HEK293 (cell line): ENCODE measurements at regions of chr19 and their contacts with region 1.

Region 1: DNA sequence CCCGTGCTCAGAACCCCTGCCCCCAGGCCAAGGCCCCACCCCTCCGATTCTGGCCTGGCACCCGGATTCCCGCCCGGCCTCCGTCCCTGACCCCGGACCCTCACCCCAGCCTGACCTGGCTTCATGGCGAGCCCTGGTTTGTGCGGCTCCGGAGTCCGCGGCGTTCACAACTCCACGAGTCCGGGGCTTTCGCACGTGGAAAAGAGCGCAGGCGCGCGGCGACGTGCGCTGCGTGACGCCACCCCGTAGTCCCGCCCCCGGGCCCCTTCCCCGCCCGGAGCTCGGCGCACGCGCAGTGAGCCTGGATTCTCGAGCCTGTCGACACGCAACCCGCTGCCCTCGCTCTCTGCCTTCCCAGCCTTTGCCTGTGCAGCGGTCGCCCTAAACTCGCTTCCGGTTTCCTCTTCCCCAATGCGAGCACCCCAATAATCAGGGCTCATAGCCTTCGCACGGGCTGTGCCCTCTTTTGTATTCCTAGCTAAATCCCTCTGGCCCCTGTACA is at the start of gene FBL:
- H3K4me3 ChIP-seq: peak within 1 kb of the TSS; percentile 62
- H3K27ac ChIP-seq: peak within 1 kb of the TSS; percentile 79
- H3K4me1 ChIP-seq: peaks cover 49% of the 10 kb centered on the region
- CTCF ChIP-seq: no peak

Region 2: GRCh38 chr19:39470724-39471339 is 375.4 kb before region 1 on chr19:
- CTCF ChIA-PET with region 1: no interaction called
- POLR2A ChIA-PET with region 1: no interaction called
- H3K4me3 ChIP-seq: no peak overlapping the region
- H3K27ac ChIP-seq: peak overlapping the region; percentile 19; the same call in 1 of the 2 replicates
- H3K4me1 ChIP-seq: no peaks in the 10 kb centered on the region
- CTCF ChIP-seq: no peak

Region 3: GRCh38 chr19:39671738-39672363 is 174.4 kb before region 1 on chr19:
- CTCF ChIA-PET with region 1: interaction called, 34 read pairs
- POLR2A ChIA-PET with region 1: no interaction called
- H3K4me3 ChIP-seq: no peak overlapping the region
- H3K27ac ChIP-seq: no peak overlapping the region
- H3K4me1 ChIP-seq: no peaks in the 10 kb centered on the region
- CTCF ChIP-seq: peak; percentile 94

Region 4: GRCh38 chr19:39778763-39779162 is 67.5 kb before region 1 on chr19 and contains the start of gene LEUTX:
- CTCF ChIA-PET with region 1: interaction called, 12 read pairs
- POLR2A ChIA-PET with region 1: interaction called, 4 read pairs
- H3K4me3 ChIP-seq: no peak within 1 kb of the TSS
- H3K27ac ChIP-seq: no peak within 1 kb of the TSS
- H3K4me1 ChIP-seq: no peaks in the 10 kb centered on the region
- CTCF ChIP-seq: no peak

Region 5: GRCh38 chr19:39813264-39813993 is 32.8 kb before region 1 on chr19:
- CTCF ChIA-PET with region 1: interaction called, 102 read pairs
- POLR2A ChIA-PET with region 1: interaction called, 3 read pairs
- H3K4me3 ChIP-seq: no peak overlapping the region
- H3K27ac ChIP-seq: 0 out of 2 replicates have a peak overlapping the region, but pooled peaks have one; percentile 53
- H3K4me1 ChIP-seq: peaks cover 11% of the 10 kb centered on the region
- CTCF ChIP-seq: no peak

Region 6: GRCh38 chr19:39858541-39858940 is 12.3 kb after region 1 on chr19:
- CTCF ChIA-PET with region 1: interaction called, 14 read pairs
- POLR2A ChIA-PET with region 1: interaction called, 9 read pairs
- H3K4me3 ChIP-seq: no peak overlapping the region
- H3K27ac ChIP-seq: no peak overlapping the region
- H3K4me1 ChIP-seq: no peaks in the 10 kb centered on the region
- CTCF ChIP-seq: no peak

Region 7: GRCh38 chr19:40090241-40091204 is 244.3 kb after region 1 on chr19 and contains the start of gene ZNF780A:
- CTCF ChIA-PET with region 1: no interaction called
- POLR2A ChIA-PET with region 1: interaction called, 12 read pairs
- H3K4me3 ChIP-seq: peak within 1 kb of the TSS; percentile 51
- H3K27ac ChIP-seq: peak within 1 kb of the TSS; percentile 87
- H3K4me1 ChIP-seq: peaks cover 16% of the 10 kb centered on the region
- CTCF ChIP-seq: peak; percentile 38; the same call in 1 of the 2 replicates

Region 8: DNA sequence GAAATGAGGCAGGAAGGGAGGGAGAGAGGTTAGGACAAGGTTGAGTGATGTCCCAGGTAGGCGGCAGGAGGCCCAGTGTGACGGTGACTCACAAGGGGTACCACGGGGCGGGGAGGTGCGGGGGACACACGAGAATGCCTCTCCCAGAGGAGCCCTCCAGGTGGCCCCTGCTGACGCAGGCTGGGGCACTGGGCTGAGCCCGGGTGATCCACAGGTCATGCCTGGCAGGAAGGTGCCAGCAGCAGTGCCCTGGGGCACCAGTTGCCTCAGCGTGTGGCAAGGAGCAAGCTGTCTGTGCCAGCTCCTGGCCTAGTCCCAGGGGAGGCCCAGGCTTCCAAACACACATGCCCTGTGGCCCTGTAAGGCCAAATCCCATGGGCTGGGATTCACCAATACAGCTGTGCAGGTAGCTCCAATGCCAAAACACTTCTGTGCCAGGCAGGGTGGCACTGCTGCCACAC is 410.9 kb after region 1 on chr19:
- CTCF ChIA-PET with region 1: no interaction called
- POLR2A ChIA-PET with region 1: no interaction called
- H3K4me3 ChIP-seq: no peak overlapping the region
- H3K27ac ChIP-seq: 0 out of 2 replicates have a peak overlapping the region, but pooled peaks have one; percentile 31
- H3K4me1 ChIP-seq: peaks cover 6% of the 10 kb centered on the region; the same call in 1 of the 2 replicates
- CTCF ChIP-seq: no peak

Region 9: DNA sequence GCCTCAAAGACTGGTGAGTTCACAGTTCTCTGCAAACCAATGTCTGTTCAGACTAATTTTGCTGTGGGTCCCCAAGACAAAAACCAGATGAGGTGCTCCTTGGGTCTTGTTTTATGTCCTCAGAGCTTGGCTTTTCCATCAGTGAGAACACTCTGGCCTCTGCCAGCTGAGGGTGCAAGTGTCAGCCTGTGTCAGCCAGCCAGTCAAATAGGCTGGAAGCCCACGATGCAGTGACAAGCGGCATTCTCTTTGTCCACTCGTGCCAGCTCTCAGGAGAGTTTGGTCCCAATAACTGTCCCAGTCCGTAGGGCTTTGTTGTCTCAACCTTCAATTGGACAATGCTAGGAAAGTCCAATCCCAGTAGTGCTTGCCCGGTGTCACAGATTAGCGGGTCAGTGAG is 448.3 kb after region 1 on chr19:
- CTCF ChIA-PET with region 1: no interaction called
- POLR2A ChIA-PET with region 1: no interaction called
- H3K4me3 ChIP-seq: no peak overlapping the region
- H3K27ac ChIP-seq: no peak overlapping the region; the same call in 1 of the 2 replicates
- H3K4me1 ChIP-seq: no peaks in the 10 kb centered on the region; the same call in 1 of the 2 replicates
- CTCF ChIP-seq: no peak